ENCODE measurements at regions of chr3 and their contacts with region 1.

Region 1: GRCh38 chr3:23019661-23020273 is 183.4 kb upstream of the UBE2E2 start:
- DNase-seq: no peak
- ATAC-seq: no peak
- H3K4me3 ChIP-seq: no peak overlapping the region
- H3K4me3 Mint-ChIP-seq: no peak overlapping the region
- H3K27ac ChIP-seq: no peak overlapping the region
- H3K27ac Mint-ChIP-seq: no peak overlapping the region
- H3K4me1 ChIP-seq: no peaks in the 10 kb centered on the region
- H3K4me1 Mint-ChIP-seq: no peaks in the 10 kb centered on the region
- H3K27me3 ChIP-seq: peaks cover 0 to 3% of the 10 kb centered on the region in 2 experiments
- H3K27me3 Mint-ChIP-seq: no peaks in the 10 kb centered on the region

Region 2: DNA sequence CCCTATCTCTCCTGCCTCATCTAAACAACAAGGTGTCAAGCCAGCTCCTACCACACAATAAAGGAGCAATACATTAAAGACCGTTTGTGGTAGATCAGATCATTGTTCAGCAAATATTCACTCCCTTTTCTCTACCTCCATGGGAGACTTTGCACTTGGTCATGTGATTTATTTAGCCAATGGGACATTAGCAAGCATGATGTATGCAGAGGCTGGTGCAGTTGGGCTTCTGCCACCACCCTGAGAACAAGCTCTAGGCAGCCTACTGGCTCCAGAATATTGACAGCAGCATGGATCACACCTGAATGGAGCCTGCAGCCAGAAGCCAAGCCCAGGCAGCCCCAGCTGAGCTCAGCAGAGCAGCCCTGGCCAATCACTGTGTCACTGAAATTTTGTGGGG is 84.0 kb after region 1 on chr3:
- CTCF ChIA-PET with region 1: no interaction called
- POLR2A ChIA-PET with region 1: interaction called in 1 of 2 experiments, 12 read pairs
- DNase-seq: no peak
- ATAC-seq: no peak
- H3K4me3 ChIP-seq: no peak overlapping the region
- H3K4me3 Mint-ChIP-seq: no peak overlapping the region
- H3K27ac ChIP-seq: no peak overlapping the region
- H3K27ac Mint-ChIP-seq: no peak overlapping the region
- H3K4me1 ChIP-seq: no peaks in the 10 kb centered on the region
- H3K4me1 Mint-ChIP-seq: no peaks in the 10 kb centered on the region
- H3K27me3 ChIP-seq: no peaks in the 10 kb centered on the region
- H3K27me3 Mint-ChIP-seq: peaks cover 0 to 7% of the 10 kb centered on the region in 2 donors

Measured in T-cell (primary cell).